ENCODE measurements at regions of chr3 and their contacts with region 1.

Region 1: DNA sequence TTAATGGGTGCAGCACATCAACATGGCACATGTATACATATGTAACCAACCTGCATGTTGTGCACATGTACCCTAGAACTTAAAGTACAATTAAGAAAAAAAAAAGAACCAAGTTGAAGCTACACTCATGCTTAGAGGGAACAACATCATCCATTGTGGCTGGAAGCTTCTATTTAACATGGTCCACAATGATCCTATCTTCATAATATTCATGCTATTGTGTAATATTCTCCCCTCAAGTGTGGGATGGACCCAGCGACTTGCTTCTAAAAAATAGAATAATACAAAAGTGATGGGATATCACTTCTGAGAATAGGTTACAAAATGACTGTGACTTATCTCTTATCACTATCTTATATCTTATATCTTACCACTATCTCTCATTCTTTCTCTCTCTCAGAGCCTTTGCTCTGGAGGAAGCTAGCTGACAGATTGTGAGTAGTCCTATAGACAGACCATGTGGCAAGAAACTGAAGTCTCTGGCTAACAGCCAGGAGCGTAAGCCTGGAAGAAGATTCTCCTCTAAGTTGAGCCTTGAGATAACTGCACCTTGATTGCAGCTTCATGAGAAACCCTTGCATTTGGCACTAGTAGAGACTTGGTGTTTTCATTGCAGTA is 198.5 kb upstream of the MRPL3 start:
- DNase-seq: no peak
- CTCF ChIP-seq: no peak

Region 2: DNA sequence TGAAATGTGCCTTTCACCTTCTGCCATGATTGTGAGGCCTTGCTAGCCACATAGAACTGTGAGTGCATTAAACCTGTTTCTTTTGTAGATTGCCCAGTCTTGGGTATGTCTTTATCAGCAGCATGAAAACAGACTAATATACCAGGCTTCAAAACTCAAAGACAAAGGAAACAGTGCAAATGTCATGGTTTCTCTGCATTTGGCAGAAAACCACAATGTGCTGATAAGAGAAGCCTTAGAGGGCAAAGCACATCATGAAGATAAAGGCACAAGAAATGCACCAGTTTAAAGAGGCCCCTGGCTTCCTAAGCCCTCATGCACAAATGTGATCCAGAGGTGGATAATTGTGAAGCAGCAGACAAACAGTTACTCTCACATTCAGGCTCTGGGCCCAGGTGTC is 74.4 kb after region 1 on chr3:
- CTCF ChIA-PET with region 1: no interaction called
- POLR2A ChIA-PET with region 1: no interaction called
- DNase-seq: no peak
- CTCF ChIP-seq: no peak

Region 3: DNA sequence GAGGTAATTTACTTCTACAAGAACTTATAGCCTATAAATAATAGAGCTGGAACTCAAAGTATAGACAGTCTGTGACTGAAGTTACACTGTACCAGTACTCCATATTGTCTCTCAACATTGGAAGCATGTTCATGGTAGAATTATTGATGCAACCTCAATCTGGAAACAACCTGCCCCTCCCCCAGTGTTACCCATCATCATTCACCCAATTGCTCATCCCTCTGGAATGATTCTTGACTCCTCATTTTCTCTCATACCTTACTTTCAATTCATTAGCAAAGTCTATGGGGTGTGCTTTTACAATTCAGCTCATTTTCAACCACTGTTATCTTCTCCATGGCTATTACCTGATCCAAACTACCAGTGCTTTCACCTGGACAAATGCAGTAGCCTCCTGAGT is 181.8 kb after region 1 on chr3:
- CTCF ChIA-PET with region 1: no interaction called
- POLR2A ChIA-PET with region 1: no interaction called
- DNase-seq: no peak
- CTCF ChIP-seq: no peak

Region 4: GRCh38 chr3:132549890-132550578 is 848.8 kb after region 1 on chr3:
- CTCF ChIA-PET with region 1: no interaction called
- POLR2A ChIA-PET with region 1: interaction called, 10 read pairs
- DNase-seq: peak; percentile 33
- CTCF ChIP-seq: no peak

Measured in GM10248 (cell line).